ENCODE measurements at regions of chr7 and their contacts with region 1.

Region 1: DNA sequence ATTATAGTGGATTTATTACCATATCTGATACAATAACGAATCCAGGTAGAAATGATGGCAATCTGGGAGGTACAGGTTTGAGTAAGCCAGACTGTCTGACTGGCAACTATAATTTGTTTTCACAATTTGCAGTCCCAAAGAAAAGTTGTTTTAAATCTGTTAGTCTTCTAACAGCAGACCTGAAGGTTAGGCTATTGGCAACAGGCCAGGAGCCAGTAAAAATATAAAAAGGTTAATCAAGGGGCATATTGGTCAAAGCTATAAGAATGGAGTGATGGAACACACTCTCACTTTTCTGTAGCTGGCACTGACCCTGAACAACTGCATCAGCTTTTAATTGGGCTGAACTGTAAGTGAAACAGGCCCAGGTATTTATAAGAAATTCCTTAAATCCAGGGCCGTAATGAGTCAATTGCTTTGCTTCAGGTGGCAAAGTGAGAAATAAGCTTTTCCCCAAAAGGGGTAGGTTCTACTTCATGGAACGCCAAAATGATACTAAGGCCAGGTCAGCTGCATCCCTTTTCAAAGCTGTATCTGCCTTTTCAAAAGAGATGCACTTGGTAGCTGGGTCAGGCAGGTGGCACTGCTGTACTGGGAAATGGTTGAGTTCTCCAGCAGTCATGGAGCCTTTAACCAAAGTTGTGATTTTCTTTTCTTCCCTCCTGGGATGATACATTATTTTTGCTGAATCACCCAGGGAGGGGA is 7.0 kb upstream of the GPR22 start:
- DNase-seq: peak; percentile 67
- H3K4me3 Mint-ChIP-seq: no peak overlapping the region
- H3K27ac Mint-ChIP-seq: no peak overlapping the region
- H3K4me1 Mint-ChIP-seq: no peaks in the 10 kb centered on the region
- H3K27me3 Mint-ChIP-seq: no peaks in the 10 kb centered on the region

Region 2: DNA sequence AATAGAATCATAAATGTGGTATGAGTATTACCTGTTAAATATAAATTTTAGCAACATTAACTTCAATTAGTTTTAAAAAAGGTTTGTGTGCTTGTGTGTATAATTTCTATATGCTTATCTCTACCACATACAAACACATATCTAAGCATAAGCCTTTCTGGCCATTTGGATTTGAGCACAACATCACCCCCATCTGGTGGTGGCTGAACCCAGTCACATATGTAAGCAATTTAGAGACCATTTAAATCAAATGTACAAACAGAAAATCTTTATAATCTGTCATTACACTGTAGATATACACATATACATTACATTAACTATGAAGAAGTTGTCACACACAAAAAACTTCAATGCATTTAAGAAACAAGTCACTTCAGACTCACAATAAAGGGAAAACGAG is 38.7 kb after region 1 on chr7:
- CTCF ChIA-PET with region 1: interaction called, 15 read pairs
- DNase-seq: peak; percentile 54
- H3K4me3 Mint-ChIP-seq: no peak overlapping the region
- H3K27ac Mint-ChIP-seq: no peak overlapping the region
- H3K4me1 Mint-ChIP-seq: peaks cover 9% of the 10 kb centered on the region
- H3K27me3 Mint-ChIP-seq: no peaks in the 10 kb centered on the region

Region 3: GRCh38 chr7:107725151-107725740 is 262.4 kb after region 1 on chr7:
- CTCF ChIA-PET with region 1: interaction called, 71 read pairs
- DNase-seq: peak; percentile 61
- H3K4me3 Mint-ChIP-seq: no peak overlapping the region
- H3K27ac Mint-ChIP-seq: no peak overlapping the region
- H3K4me1 Mint-ChIP-seq: no peaks in the 10 kb centered on the region
- H3K27me3 Mint-ChIP-seq: peaks cover 20% of the 10 kb centered on the region

Measured in activated naive CD4-positive, alpha-beta T cell treated with anti-CD3 and anti-CD28 coated beads, Interleukin-2, amount 10 ng/mL, durations not matched to agents 7 days and 5 days (primary cell).